CD4-positive, alpha-beta T cell (primary cell): ENCODE measurements at regions of chr13 and their contacts with region 1.

Region 1: GRCh38 chr13:27171827-27172494 is 350 bp upstream of the USP12 start:
- DNase-seq: peak; percentile 81 to 97 (median 92)
- ATAC-seq: peak; percentile 83
- H3K4me3 ChIP-seq: peak overlapping the region; percentile 73
- H3K4me3 Mint-ChIP-seq: peak overlapping the region; percentile 87
- H3K27ac ChIP-seq: peak overlapping the region; percentile 89
- H3K27ac Mint-ChIP-seq: peak overlapping the region; percentile 91
- H3K4me1 ChIP-seq: peaks cover 36% of the 10 kb centered on the region
- H3K4me1 Mint-ChIP-seq: peaks cover 45% of the 10 kb centered on the region
- H3K27me3 ChIP-seq: no peaks in the 10 kb centered on the region
- H3K27me3 Mint-ChIP-seq: no peaks in the 10 kb centered on the region
- CTCF ChIP-seq: peak; percentile 16

Region 2: GRCh38 chr13:26253787-26254582 is 918.0 kb before region 1 on chr13 and contains the start of gene CDK8:
- CTCF ChIA-PET with region 1: no interaction called
- POLR2A ChIA-PET with region 1: no interaction called
- intact Hi-C with region 1: loop called in 1 of 2 experiments (anchors 10 kb)
- DNase-seq: peak; percentile 76 to 94 (median 86)
- ATAC-seq: peak; percentile 84
- H3K4me3 ChIP-seq: peak within 1 kb of the TSS; percentile 73
- H3K4me3 Mint-ChIP-seq: peak within 1 kb of the TSS; percentile 94
- H3K27ac ChIP-seq: peak within 1 kb of the TSS; percentile 78 to 84
- H3K27ac Mint-ChIP-seq: peak within 1 kb of the TSS; percentile 84
- H3K4me1 ChIP-seq: peaks cover 12% of the 10 kb centered on the region
- H3K4me1 Mint-ChIP-seq: peaks cover 42% of the 10 kb centered on the region
- H3K27me3 ChIP-seq: no peaks in the 10 kb centered on the region
- H3K27me3 Mint-ChIP-seq: no peaks in the 10 kb centered on the region
- CTCF ChIP-seq: no peak
- total RNA-seq, gene CDK8: 6.0 to 6.7 TPM

Region 3: GRCh38 chr13:27006519-27007161 is 165.3 kb before region 1 on chr13:
- CTCF ChIA-PET with region 1: no interaction called
- POLR2A ChIA-PET with region 1: no interaction called
- intact Hi-C with region 1: no loop called
- DNase-seq: no peak
- ATAC-seq: no peak
- H3K4me3 ChIP-seq: no peak overlapping the region
- H3K4me3 Mint-ChIP-seq: no peak overlapping the region
- H3K27ac ChIP-seq: no peak overlapping the region
- H3K27ac Mint-ChIP-seq: no peak overlapping the region
- H3K4me1 ChIP-seq: peaks cover 3% of the 10 kb centered on the region
- H3K4me1 Mint-ChIP-seq: no peaks in the 10 kb centered on the region
- H3K27me3 ChIP-seq: peaks cover 20 to 26% of the 10 kb centered on the region in 2 experiments
- H3K27me3 Mint-ChIP-seq: peaks cover 65% of the 10 kb centered on the region
- CTCF ChIP-seq: no peak

Region 4: GRCh38 chr13:27251166-27252091 is 79.5 kb after region 1 on chr13 and contains the start of gene RPL21:
- CTCF ChIA-PET with region 1: no interaction called
- POLR2A ChIA-PET with region 1: interaction called, 16 read pairs
- intact Hi-C with region 1: loop called (anchors 1 kb)
- DNase-seq: peak; percentile 85 to 97 (median 90)
- ATAC-seq: peak; percentile 89
- H3K4me3 ChIP-seq: peak within 1 kb of the TSS; percentile 69
- H3K4me3 Mint-ChIP-seq: peak within 1 kb of the TSS; percentile 95
- H3K27ac ChIP-seq: peak within 1 kb of the TSS; percentile 90 to 98
- H3K27ac Mint-ChIP-seq: peak within 1 kb of the TSS; percentile 99
- H3K4me1 ChIP-seq: peaks cover 23% of the 10 kb centered on the region
- H3K4me1 Mint-ChIP-seq: peaks cover 65% of the 10 kb centered on the region
- H3K27me3 ChIP-seq: no peaks in the 10 kb centered on the region
- H3K27me3 Mint-ChIP-seq: no peaks in the 10 kb centered on the region
- CTCF ChIP-seq: no peak
- total RNA-seq, gene RPL21: 2,736 to 2,941 TPM

Region 5: DNA sequence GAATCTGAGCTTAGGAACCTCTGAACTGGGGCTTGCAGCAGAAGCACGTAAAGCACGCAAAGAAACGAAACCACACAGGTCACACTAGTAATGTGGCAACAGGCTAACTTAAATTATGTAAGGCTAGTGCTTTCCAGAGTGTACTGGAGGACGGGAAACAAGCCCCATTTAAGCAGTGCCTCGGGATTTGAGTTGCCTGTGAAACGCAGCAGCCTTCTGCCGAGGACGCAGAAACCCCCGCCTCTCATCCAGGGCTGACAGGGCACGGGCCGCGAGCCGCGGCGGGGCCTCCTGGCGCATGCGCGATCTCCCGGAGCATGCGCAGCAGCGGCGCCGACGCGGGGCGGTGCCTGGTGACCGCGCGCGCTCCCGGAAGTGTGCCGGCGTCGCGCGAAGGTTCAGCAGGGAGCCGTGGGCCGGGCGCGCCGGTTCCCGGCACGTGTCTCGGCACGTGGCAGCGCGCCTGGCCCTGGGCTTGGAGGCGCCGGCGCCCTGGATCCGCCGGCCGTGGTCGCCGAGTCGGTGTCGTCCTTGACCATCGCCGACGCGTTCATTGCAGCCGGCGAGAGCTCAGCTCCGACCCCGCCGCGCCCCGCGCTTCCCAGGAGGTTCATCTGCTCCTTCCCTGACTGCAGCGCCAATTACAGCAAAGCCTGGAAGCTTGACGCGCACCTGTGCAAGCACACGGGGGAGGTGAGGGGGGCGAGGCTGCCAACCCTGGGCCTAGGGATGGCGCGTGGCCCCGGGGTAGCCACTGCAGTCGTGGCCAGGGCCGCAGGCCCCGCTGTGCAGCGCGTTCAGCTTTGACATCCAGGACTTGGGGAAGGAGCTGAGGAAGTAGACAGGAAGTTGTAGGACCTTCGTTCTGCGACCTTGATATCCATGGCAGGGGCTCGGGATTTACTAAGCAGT is 252.5 kb after region 1 on chr13 and contains the start of gene GTF3A:
- CTCF ChIA-PET with region 1: no interaction called
- POLR2A ChIA-PET with region 1: interaction called, 3 read pairs
- intact Hi-C with region 1: loop called in 1 of 2 experiments (anchors 10 kb)
- DNase-seq: peak; percentile 69 to 97 (median 87)
- ATAC-seq: peak; percentile 53
- H3K4me3 ChIP-seq: peak within 1 kb of the TSS; percentile 79
- H3K4me3 Mint-ChIP-seq: peak within 1 kb of the TSS; percentile 90
- H3K27ac ChIP-seq: peak within 1 kb of the TSS; percentile 91 to 95
- H3K27ac Mint-ChIP-seq: peak within 1 kb of the TSS; percentile 95
- H3K4me1 ChIP-seq: peaks cover 50% of the 10 kb centered on the region
- H3K4me1 Mint-ChIP-seq: peaks cover 39% of the 10 kb centered on the region
- H3K27me3 ChIP-seq: no peaks in the 10 kb centered on the region
- H3K27me3 Mint-ChIP-seq: no peaks in the 10 kb centered on the region
- CTCF ChIP-seq: no peak
- total RNA-seq, gene GTF3A: 129 to 132 TPM

Region 6: DNA sequence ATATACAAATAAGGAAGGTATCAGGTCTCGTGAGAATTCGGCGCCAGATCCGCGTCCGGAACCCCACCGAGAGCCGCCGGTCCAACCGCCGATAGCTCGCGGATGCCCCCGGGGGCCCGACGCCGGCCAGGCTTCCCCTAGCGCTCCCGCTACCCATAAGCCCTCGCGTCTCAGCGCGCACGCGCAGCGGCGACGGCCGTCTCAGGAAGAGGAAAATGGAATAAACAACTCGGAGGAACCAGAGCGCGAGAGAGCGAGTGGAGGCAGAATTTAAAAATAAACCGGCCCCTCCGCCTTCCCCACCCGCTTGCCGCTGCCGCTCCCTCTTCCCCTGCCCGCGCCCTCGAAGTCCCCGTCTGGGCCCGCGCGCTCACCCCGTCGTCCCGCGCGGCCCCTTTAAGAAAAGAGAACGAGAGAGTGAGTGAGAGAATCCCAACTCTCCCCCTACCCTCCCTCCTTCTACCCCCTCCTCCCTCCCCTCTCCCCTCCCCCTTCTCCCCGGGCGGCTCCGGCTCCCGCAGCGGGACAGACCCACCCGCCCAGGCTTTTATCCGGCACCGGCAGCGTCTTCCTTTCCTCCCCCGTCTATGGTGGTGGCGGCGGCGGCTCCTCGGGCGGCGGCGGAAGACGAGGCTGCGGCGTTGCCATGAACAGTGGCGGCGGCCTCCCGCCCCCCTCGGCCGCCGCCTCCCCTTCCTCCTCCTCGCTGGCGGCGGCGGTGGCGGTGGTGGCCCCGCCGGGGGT is 966.2 kb after region 1 on chr13 and contains the start of gene PAN3:
- CTCF ChIA-PET with region 1: no interaction called
- POLR2A ChIA-PET with region 1: no interaction called
- intact Hi-C with region 1: loop called (anchors 2 kb)
- DNase-seq: peak; percentile 85 to 97 (median 91)
- ATAC-seq: peak; percentile 50
- H3K4me3 ChIP-seq: peak within 1 kb of the TSS; percentile 81
- H3K4me3 Mint-ChIP-seq: peak within 1 kb of the TSS; percentile 95
- H3K27ac ChIP-seq: peak within 1 kb of the TSS; percentile 93 to 99
- H3K27ac Mint-ChIP-seq: peak within 1 kb of the TSS; percentile 99
- H3K4me1 ChIP-seq: peaks cover 37% of the 10 kb centered on the region
- H3K4me1 Mint-ChIP-seq: peaks cover 53% of the 10 kb centered on the region
- H3K27me3 ChIP-seq: no peaks in the 10 kb centered on the region
- H3K27me3 Mint-ChIP-seq: no peaks in the 10 kb centered on the region
- CTCF ChIP-seq: no peak
- total RNA-seq, gene PAN3: 56.9 to 59.5 TPM